Ovary (tissue), 10 donors: ENCODE measurements at regions of chr12 and their contacts with region 1.

Region 1: DNA sequence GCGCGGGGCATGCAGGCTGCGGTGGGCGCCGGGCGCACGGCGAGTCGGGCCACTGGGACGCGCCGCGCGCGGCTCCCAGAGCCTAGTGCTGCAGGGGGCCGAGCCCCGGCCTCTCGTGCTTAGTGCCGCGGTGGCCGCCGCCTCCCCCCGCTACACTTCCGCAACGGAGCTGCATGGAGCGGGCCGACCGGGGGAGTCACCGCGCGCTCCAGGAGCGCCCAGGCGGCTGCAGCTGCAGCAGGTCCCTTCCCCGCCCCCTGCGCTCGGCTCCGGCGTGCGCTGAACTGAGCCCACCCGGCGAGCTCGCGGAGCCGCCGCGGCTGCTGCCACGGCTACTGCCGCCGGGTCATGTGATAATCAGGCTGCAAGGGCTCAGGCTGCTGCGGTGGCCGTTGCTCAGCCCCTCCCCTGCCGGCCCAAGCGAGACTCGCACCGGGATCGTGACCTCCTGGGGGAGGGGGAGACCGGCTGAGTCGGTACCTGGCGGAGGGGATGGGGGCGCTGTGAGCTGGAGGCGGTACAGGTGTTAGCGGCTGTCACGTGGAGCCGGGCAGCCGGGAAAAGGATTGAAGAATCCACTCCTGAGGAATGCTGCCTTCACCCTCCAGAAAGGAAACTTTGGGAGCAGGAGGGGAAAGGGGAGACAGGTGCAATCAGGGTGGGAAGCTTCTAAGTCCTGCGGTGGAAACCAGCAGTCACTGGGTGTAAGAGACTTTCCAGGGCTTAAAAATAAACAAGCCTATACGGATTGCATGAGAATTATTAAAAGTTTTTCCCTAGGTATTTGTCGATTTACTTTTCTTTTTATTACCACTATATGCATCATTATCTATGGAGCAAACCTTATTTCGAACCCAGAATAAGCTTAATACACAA is at the start of gene PPM1H:
- DNase-seq: peak; percentile 46 to 79 (median 60)
- H3K4me3 ChIP-seq: peak within 1 kb of the TSS; percentile 77
- H3K27ac ChIP-seq: peak within 1 kb of the TSS in 1 of 2 donors; percentile 31
- H3K4me1 ChIP-seq: no peaks in the 10 kb centered on the region
- H3K27me3 ChIP-seq: no peaks in the 10 kb centered on the region
- CTCF ChIP-seq: peak in 1 of 3 donors; percentile 56
- EP300 ChIP-seq: no peak
- POLR2A ChIP-seq: no peak
- total RNA-seq, gene PPM1H: 1.6 to 45.4 (median 21.0) TPM

Region 2: DNA sequence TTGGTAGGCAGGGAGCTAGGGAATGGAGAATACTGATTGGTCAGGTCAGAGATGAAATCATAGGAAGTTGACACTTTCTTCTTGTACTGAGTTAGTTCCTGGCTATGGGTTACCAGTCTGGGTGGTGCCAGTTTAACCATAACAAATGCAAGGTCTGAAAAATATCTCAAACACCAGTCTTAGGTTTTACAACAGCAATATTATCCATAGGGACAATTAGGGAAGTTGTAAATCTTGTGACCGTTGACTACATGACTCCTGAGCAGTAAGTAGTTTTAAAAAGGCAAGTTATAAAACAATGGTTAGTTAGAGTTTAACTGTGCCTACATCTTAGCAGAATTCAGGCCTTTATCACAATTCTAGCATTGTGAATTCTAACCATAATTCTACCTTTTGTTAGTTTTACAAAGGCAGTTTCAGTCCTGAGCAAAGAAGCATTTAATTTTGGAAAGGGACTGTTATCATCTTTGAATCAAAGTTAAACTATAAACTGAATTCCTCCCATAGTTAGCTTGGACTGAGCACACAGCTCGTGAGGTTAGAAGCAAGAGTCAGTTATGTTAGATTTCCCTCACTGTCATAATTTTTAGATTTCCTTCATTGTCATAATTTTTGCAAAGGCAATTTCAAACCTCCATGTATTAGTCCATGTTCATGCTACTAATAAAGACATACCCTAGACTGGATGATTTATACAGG is 488.1 kb before region 1 on chr12:
- intact Hi-C with region 1: loop called in 1 of 4 experiments (anchors 10 kb)
- DNase-seq: no peak
- H3K4me3 ChIP-seq: no peak overlapping the region
- H3K27ac ChIP-seq: no peak overlapping the region
- H3K4me1 ChIP-seq: no peaks in the 10 kb centered on the region
- H3K27me3 ChIP-seq: no peaks in the 10 kb centered on the region
- CTCF ChIP-seq: no peak
- EP300 ChIP-seq: no peak
- POLR2A ChIP-seq: no peak

Region 3: DNA sequence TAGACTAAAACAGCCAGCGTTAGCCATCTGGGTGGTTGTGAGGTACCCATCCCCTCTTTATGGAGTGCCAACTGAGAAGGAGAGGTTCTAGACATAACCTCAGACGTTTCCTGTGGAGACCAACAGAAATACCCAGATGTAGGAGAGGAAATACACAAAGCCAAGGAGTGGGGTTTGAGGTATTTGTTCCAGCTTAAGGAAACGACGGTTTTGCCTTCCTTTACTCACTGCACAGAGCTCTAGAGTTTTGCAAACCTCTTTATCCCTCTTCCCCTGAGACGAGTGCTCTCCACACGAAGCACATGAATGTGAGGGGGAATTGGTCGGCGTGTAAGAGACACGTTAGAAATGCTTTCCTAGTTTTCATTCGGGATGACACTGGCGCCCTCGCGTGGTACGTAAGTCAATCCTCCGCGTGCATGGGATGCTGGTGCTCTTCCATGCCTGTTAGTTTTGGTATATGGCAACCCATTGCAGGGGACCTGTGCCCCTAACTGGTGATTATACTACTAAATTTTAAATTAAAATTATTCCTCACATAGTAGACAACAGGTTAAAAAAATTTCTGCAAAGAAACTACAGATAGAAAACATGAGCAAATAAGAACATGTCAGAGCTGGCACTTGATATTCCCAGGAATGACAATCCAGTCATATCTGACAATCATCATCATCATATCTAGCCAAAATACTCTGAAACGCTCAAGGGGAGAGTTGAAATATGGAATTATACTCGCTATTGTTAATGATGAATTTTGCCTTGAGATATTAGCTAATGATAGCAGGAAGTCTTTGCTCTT is 121.8 kb before region 1 on chr12:
- intact Hi-C with region 1: loop called in 1 of 4 experiments (anchors 10 kb)
- DNase-seq: peak; percentile 51 to 84 (median 61)
- H3K4me3 ChIP-seq: no peak overlapping the region
- H3K27ac ChIP-seq: no peak overlapping the region
- H3K4me1 ChIP-seq: no peaks in the 10 kb centered on the region
- H3K27me3 ChIP-seq: no peaks in the 10 kb centered on the region
- CTCF ChIP-seq: peak; percentile 4 to 16 (median 6)
- EP300 ChIP-seq: no peak
- POLR2A ChIP-seq: no peak

Region 4: DNA sequence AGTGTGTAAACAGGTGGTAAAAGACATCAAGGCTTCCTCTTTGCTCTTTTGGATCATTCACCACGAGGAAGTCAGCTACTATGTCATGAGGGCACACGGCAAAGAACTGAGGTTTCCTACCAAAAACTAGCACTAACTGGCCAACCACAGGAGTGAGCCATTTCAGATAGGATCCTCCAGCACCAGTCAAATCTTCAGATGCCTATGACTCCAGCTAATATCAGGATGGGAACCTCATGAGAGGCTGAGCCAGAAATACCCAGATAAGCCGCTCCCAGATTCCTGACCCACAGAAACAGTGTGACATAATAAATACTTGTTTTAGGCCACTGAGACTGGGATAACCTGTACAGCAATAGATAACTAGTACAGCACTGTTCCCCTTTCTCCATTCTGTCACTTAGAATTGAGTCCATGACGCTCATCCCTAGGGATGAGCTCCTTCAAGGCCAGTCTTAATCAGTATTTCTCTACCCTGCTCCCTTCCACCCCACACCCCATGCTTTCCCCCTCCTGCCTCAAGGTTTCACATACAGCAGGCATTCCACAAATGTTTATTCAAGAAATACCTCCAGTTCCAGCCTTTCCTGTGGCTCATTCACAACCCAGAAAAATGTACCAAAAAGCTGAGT is 68.5 kb before region 1 on chr12:
- intact Hi-C with region 1: loop called in 1 of 4 experiments (anchors 10 kb)
- DNase-seq: no peak
- H3K4me3 ChIP-seq: no peak overlapping the region
- H3K27ac ChIP-seq: no peak overlapping the region
- H3K4me1 ChIP-seq: peaks cover 8% of the 10 kb centered on the region
- H3K27me3 ChIP-seq: no peaks in the 10 kb centered on the region
- CTCF ChIP-seq: no peak
- EP300 ChIP-seq: no peak
- POLR2A ChIP-seq: no peak

Region 5: DNA sequence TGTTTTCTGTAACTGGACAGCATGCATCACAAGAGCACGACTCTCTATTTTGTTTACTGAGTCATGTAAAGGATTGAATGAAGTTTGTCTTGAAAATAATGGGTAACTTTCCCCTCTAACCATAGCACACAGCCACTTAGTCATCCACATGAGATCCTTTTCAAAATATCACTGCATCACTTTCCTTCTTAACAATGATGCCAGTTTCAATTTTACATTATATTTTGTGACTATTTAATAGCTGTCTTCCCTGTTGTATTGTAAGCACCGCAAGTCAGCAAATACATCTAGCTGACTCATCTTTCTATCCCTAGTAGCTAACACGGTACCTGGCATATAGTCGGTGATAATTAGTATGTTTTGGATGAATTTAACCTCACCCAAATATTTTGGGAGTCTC is 83.2 kb after region 1 on chr12:
- intact Hi-C with region 1: no loop called
- DNase-seq: no peak
- H3K4me3 ChIP-seq: no peak overlapping the region
- H3K27ac ChIP-seq: no peak overlapping the region
- H3K4me1 ChIP-seq: no peaks in the 10 kb centered on the region
- H3K27me3 ChIP-seq: no peaks in the 10 kb centered on the region
- CTCF ChIP-seq: no peak
- EP300 ChIP-seq: no peak
- POLR2A ChIP-seq: no peak